Left colon (tissue), 2 donors: ENCODE measurements at regions of chr12 and their contacts with region 1.

Region 1: DNA sequence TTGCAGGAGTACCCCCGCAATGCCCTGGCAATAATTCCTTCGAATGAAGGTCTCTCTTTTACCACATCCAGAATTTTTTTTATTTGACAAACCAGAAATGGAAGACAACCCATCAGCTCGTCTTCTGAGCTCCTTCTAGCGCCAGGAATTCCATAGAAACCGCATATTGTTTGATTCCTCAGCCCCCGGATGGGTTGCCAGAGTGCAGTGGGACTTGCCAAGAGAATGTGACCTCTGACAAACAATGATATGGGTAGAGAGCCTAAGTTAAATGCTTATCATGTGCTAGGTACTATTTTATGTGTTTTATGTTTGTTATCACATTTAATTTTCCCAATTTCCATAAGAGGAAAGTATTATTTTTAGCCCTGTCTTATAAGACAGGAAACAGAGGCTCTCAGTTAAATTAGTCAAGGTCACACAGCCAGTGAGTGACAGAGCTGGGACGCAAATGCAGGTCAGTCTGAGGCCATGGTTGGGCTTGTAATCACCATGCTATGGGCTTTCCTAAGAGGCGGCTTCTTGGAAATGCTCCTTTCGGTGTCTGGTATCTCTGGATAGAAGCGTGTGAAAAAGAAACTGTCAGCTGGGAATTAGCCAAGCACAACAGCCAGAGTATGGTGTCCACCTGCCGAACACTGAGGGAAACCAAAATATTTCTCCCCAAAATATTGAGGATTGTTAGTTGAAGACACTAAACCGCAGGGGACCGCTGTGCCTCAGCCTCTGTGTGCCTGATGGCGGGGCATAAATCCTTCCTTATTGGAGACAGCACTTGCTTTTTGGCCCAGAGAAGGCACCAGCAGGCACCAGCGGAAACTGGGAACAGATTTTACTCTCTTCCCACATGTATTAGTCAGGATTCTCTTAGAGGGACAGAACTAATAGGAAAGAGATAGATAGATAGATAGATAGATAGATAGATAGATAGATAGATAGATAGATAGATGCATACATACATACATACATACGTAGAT is 29.4 kb upstream of the ETFBKMT start:
- DNase-seq: no peak
- ATAC-seq: no peak

Region 2: DNA sequence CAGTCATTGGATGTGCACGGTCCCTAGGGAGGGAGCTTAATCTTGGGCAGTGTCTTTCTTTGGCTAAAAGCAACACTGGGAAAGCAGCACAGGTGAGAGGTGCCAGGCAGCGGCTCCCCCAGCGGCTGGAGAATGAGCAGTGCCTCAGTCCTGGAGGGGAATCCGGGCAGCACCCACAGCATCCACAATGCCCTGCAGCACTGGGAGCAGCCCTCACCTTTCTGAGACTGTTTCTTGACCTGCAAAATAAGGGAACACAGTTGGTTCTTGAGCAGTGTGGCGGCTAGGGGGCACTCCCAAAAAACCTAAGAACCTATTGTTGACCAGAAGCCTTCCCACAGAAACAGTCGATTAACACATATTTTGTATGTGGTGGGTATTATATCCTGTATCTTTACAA is 379.9 kb before region 1 on chr12:
- intact Hi-C with region 1: loop called in 1 of 2 experiments (anchors 10 kb)
- DNase-seq: no peak
- ATAC-seq: no peak

Region 3: DNA sequence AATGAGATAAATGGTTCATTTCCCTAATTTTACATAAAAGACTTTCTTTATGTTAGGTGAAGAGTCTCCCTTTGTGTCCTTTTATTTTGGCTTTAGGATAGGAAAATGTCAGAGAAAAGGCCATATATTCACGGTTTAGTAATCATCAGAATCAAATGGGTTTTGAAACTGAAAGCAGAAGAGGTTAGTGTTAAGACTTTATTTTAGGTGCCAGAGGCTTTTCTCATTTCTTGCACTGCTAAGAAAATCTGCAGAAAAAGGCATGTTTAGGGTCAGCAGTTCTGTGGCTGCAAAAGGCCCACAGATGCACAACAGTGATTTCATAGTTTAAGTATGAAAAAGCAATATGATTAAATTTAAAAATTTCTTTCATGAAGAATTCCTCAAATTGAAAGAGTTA is 223.7 kb before region 1 on chr12:
- intact Hi-C with region 1: loop called in 1 of 2 experiments (anchors 5 kb)
- DNase-seq: no peak
- ATAC-seq: no peak

Region 4: DNA sequence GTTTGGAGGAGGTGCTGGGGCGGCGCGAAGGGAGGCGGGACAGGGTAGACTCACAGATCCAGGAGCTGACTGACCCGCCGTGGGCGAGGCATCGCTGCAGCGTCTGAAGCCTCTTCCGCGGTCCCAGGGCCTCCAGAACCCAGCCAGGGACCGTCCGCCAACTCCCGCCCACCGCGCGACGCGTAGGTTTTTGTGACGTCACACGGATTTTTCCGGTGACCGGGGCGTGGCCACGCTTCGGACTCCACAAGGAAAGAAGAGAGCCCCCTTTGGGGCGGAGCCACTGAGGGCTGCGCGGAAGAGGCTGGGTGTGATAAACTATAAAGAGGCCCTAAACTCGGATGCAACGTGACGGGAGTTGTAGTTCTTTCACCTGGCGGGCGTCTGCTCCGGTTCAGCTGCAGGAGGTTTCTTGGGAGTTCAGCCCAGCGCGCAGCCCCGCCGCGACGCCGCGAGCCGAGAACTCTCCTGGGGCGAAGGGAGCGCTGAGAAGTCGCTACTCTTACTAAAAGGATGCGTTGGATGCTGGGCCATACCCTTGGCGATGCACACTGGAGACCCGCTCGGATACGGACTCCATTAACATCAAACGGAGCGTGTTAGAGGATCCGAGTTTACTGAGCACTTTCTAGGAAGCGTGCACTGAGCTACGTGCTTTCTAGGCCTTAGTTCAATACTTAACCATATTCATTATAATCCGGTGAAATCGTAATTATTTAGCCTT is 99.0 kb after region 1 on chr12 and contains the start of gene AMN1:
- intact Hi-C with region 1: no loop called
- DNase-seq: peak; percentile 99 to 100
- ATAC-seq: peak; percentile 92
- total RNA-seq, gene AMN1: 3.0 to 6.8 TPM